ENCODE measurements at regions of chr9 and their contacts with region 1.

Region 1: DNA sequence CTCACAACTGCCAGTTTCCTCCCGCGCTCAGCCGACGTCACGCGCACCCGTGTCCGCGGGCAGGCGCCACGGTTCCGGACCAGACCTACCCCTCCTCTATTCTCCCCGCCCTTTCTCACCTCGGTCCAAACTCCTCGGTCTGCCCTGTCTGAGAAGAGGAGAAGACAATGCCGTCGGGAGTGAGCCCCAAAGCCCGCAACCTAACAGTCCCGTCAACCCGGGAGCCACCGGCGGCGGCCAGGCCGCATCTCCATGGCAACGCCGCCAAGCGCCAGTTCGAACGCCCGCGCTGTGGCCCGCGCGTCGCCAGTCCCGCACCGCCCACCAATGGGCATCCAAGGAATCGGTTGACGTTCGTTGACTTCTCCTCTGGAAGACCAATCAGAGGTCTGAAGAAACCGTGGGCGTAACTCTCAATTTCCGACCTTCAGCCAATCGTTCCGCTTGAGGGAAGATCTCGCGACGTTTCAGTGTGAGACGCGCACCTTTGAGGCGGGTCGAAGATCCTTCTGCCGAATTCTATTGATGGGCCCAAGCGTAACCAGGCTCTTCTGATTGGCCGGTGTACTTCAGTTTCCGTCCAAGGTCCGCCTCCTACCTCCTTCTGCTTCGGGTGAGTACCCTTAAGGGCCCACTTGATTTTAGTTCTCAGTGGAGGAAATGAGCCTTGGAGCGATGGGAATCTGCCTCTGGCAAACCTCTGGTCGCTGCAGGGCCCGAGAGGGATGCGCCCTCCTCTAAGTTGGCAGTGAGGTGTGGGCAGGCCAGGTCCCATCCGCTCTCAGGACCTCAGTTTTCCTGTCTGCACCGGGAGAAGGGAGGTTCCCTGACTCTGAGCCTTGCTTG is at the starts of genes KIF24 and NUDT2:
- DNase-seq: peak; percentile 97
- H3K4me3 Mint-ChIP-seq: peak within 1 kb of the TSS; percentile 87
- H3K27ac Mint-ChIP-seq: peak within 1 kb of the TSS; percentile 93
- H3K4me1 Mint-ChIP-seq: peaks cover 45% of the 10 kb centered on the region
- H3K27me3 Mint-ChIP-seq: no peaks in the 10 kb centered on the region
- total RNA-seq, gene KIF24: 8.4 to 8.6 TPM
- total RNA-seq, gene NUDT2: 33.3 to 35.0 TPM

Region 2: GRCh38 chr9:34376596-34377403 is 47.6 kb after region 1 on chr9 and contains the start of gene MYORG:
- CTCF ChIA-PET with region 1: interaction called, 109 read pairs
- POLR2A ChIA-PET with region 1: interaction called, 13 read pairs
- DNase-seq: peak; percentile 99
- H3K4me3 Mint-ChIP-seq: peak within 1 kb of the TSS; percentile 85
- H3K27ac Mint-ChIP-seq: peak within 1 kb of the TSS; percentile 72
- H3K4me1 Mint-ChIP-seq: peaks cover 45% of the 10 kb centered on the region
- H3K27me3 Mint-ChIP-seq: peaks cover 11% of the 10 kb centered on the region
- total RNA-seq, gene MYORG: 2.7 to 4.7 TPM

Measured in activated CD4-positive, alpha-beta memory T cell treated with anti-CD3 and anti-CD28 coated beads, Interleukin-2, amount 10 ng/mL, durations not matched to agents 7 days and 5 days (primary cell).